Breast epithelium (tissue), 4 donors: ENCODE measurements at regions of chr4 and their contacts with region 1.

Region 1: DNA sequence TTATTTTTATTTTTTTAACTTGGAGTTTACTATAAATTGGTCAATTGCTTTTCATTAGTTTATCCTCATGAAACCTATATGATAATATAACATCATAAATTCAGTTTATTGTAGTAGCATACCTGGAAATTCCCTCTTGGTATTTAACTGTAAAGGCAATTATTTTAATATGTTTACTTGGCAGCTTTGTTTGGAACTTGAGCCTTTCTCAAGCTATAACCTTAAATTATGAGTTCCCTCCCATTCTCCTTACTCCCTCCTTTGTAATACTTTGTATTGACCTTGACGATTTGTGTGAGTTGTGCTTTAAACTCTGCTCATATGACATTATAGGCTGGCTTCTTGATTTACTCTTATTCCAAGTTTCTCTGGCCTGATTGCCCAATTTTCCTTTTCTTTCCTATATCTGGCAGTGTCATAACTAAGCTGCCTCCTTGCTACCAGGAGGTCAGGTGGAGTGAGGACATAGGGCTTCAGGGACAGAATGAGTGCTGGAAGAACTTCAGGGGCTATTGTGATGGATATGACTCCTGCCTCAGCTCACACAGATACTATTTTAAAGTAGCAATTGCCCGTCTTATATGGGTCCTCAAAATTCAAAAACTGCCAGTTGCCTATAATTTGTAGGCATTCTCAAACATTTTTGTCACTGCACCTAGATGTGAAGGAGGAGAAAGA is 77.7 kb downstream of the RAP1GDS1 start:
- DNase-seq: no peak
- H3K4me3 ChIP-seq: no peak overlapping the region
- H3K27ac ChIP-seq: no peak overlapping the region
- H3K4me1 ChIP-seq: no peaks in the 10 kb centered on the region
- H3K27me3 ChIP-seq: no peaks in the 10 kb centered on the region
- CTCF ChIP-seq: no peak
- POLR2A ChIP-seq: no peak

Region 2: GRCh38 chr4:98242538-98242937 is 96.4 kb before region 1 on chr4:
- intact Hi-C with region 1: no loop called
- DNase-seq: no peak
- H3K4me3 ChIP-seq: no peak overlapping the region
- H3K27ac ChIP-seq: no peak overlapping the region
- H3K4me1 ChIP-seq: no peaks in the 10 kb centered on the region
- H3K27me3 ChIP-seq: no peaks in the 10 kb centered on the region
- CTCF ChIP-seq: no peak
- POLR2A ChIP-seq: no peak

Region 3: GRCh38 chr4:98275145-98275544 is 63.8 kb before region 1 on chr4:
- intact Hi-C with region 1: loop called (anchors 2 kb)
- DNase-seq: no peak
- H3K4me3 ChIP-seq: no peak overlapping the region
- H3K27ac ChIP-seq: no peak overlapping the region
- H3K4me1 ChIP-seq: no peaks in the 10 kb centered on the region
- H3K27me3 ChIP-seq: no peaks in the 10 kb centered on the region
- CTCF ChIP-seq: no peak
- POLR2A ChIP-seq: no peak

Region 4: GRCh38 chr4:98352396-98352795 is 13.5 kb after region 1 on chr4:
- intact Hi-C with region 1: no loop called
- DNase-seq: no peak
- H3K4me3 ChIP-seq: peak overlapping the region in 1 of 3 donors; percentile 17
- H3K27ac ChIP-seq: no peak overlapping the region
- H3K4me1 ChIP-seq: no peaks in the 10 kb centered on the region
- H3K27me3 ChIP-seq: no peaks in the 10 kb centered on the region
- CTCF ChIP-seq: no peak
- POLR2A ChIP-seq: no peak